Endothelial cell of umbilical vein (primary cell): ENCODE measurements at regions of chr13 and their contacts with region 1.

Region 1: GRCh38 chr13:96020155-96020575 is 33.0 kb downstream of the UGGT2 start:
- DNase-seq: peak; percentile 77
- H3K4me3 ChIP-seq: no peak overlapping the region
- H3K27ac ChIP-seq: no peak overlapping the region
- H3K4me1 ChIP-seq: peaks cover 9% of the 10 kb centered on the region
- H3K27me3 ChIP-seq: no peaks in the 10 kb centered on the region
- CTCF ChIP-seq: peak; percentile 70 to 71
- POLR2A ChIP-seq: no peak

Region 2: DNA sequence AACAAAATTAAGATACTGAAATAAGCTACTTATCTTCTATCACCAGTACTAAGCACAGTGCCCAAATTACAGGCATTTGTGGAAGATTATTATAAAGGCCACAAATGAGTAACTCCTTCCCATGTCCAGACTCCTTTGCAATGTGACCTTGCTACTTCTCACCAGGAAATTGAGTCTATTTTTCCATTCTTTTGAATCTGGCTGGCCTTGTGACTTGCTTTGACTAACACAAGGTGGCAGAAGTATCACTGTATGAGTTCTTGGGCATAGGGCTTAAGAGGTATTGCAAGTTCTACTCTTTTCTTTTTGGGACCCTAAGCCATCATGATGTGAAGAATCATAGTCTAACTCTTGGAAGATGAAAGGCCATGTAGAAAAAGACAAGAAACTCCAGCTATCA is 16.9 kb before region 1 on chr13:
- CTCF ChIA-PET with region 1: interaction called, 16 read pairs
- POLR2A ChIA-PET with region 1: no interaction called
- dilution Hi-C with region 1: no loop called
- intact Hi-C with region 1: no loop called
- DNase-seq: peak; percentile 69
- H3K4me3 ChIP-seq: no peak overlapping the region
- H3K27ac ChIP-seq: no peak overlapping the region
- H3K4me1 ChIP-seq: no peaks in the 10 kb centered on the region
- H3K27me3 ChIP-seq: no peaks in the 10 kb centered on the region
- CTCF ChIP-seq: no peak
- POLR2A ChIP-seq: no peak

Region 3: GRCh38 chr13:96075953-96076543 is 55.9 kb after region 1 on chr13:
- CTCF ChIA-PET with region 1: interaction called, 18 read pairs
- POLR2A ChIA-PET with region 1: no interaction called
- dilution Hi-C with region 1: no loop called
- intact Hi-C with region 1: loop called (anchors 1 kb)
- DNase-seq: peak; percentile 39
- H3K4me3 ChIP-seq: no peak overlapping the region
- H3K27ac ChIP-seq: no peak overlapping the region
- H3K4me1 ChIP-seq: no peaks in the 10 kb centered on the region
- H3K27me3 ChIP-seq: peaks cover 9% of the 10 kb centered on the region in 2 experiments
- CTCF ChIP-seq: peak; percentile 46 to 52
- POLR2A ChIP-seq: no peak

Region 4: GRCh38 chr13:96141027-96141426 is 120.9 kb after region 1 on chr13:
- CTCF ChIA-PET with region 1: interaction called, 11 read pairs
- POLR2A ChIA-PET with region 1: no interaction called
- dilution Hi-C with region 1: no loop called
- intact Hi-C with region 1: no loop called
- DNase-seq: no peak
- H3K4me3 ChIP-seq: no peak overlapping the region
- H3K27ac ChIP-seq: no peak overlapping the region
- H3K4me1 ChIP-seq: no peaks in the 10 kb centered on the region
- H3K27me3 ChIP-seq: no peaks in the 10 kb centered on the region
- CTCF ChIP-seq: no peak
- POLR2A ChIP-seq: no peak

Region 5: DNA sequence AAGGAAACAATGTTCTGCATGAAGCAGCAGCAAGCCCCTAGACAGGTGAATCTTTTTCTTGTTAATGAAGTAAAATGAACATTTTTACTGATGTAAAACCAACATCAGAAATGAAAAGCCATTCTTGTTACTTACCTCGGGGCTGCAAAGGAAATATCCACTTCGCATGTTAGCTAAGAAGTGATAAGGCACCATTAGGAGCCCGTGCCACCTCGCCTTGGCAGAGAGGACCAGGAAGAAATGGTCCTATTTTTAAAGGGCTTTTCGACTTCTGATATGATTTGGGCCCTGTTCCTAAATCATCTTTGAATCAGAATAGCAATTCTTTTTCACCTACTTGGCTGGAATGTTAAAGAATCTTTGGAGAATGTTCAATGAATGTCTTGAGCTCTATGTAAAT is 790.9 kb after region 1 on chr13:
- CTCF ChIA-PET with region 1: interaction called, 13 read pairs
- POLR2A ChIA-PET with region 1: no interaction called
- dilution Hi-C with region 1: no loop called
- intact Hi-C with region 1: no loop called
- DNase-seq: no peak
- H3K4me3 ChIP-seq: no peak overlapping the region
- H3K27ac ChIP-seq: no peak overlapping the region
- H3K4me1 ChIP-seq: no peaks in the 10 kb centered on the region
- H3K27me3 ChIP-seq: no peaks in the 10 kb centered on the region
- CTCF ChIP-seq: no peak
- POLR2A ChIP-seq: no peak

Region 6: GRCh38 chr13:96958286-96958891 is 938.2 kb after region 1 on chr13:
- CTCF ChIA-PET with region 1: interaction called, 198 read pairs
- POLR2A ChIA-PET with region 1: no interaction called
- dilution Hi-C with region 1: no loop called
- intact Hi-C with region 1: loop called (anchors 1 kb)
- DNase-seq: peak; percentile 38
- H3K4me3 ChIP-seq: no peak overlapping the region
- H3K27ac ChIP-seq: no peak overlapping the region
- H3K4me1 ChIP-seq: no peaks in the 10 kb centered on the region
- H3K27me3 ChIP-seq: peaks cover 5 to 9% of the 10 kb centered on the region in 2 experiments
- CTCF ChIP-seq: peak; percentile 56 to 74
- POLR2A ChIP-seq: no peak